T-cell (primary cell): ENCODE measurements at regions of chr10 and their contacts with region 1.

Region 1: GRCh38 chr10:87991946-87992345 is 128.5 kb downstream of the PTEN start:
- DNase-seq: no peak
- ATAC-seq: no peak
- H3K4me3 ChIP-seq: no peak overlapping the region
- H3K4me3 Mint-ChIP-seq: no peak overlapping the region
- H3K27ac ChIP-seq: no peak overlapping the region
- H3K27ac Mint-ChIP-seq: no peak overlapping the region
- H3K4me1 ChIP-seq: peaks cover 0 to 4% of the 10 kb centered on the region in 2 experiments
- H3K4me1 Mint-ChIP-seq: peaks cover 8 to 19% (median 17%) of the 10 kb centered on the region in 3 donors
- H3K27me3 ChIP-seq: no peaks in the 10 kb centered on the region
- H3K27me3 Mint-ChIP-seq: no peaks in the 10 kb centered on the region

Region 2: GRCh38 chr10:88012641-88013040 is 20.7 kb after region 1 on chr10:
- CTCF ChIA-PET with region 1: no interaction called
- POLR2A ChIA-PET with region 1: interaction called in 1 of 2 experiments, 14 read pairs
- DNase-seq: no peak
- ATAC-seq: no peak
- H3K4me3 ChIP-seq: no peak overlapping the region
- H3K4me3 Mint-ChIP-seq: no peak overlapping the region
- H3K27ac ChIP-seq: no peak overlapping the region
- H3K27ac Mint-ChIP-seq: no peak overlapping the region
- H3K4me1 ChIP-seq: no peaks in the 10 kb centered on the region
- H3K4me1 Mint-ChIP-seq: no peaks in the 10 kb centered on the region
- H3K27me3 ChIP-seq: no peaks in the 10 kb centered on the region
- H3K27me3 Mint-ChIP-seq: no peaks in the 10 kb centered on the region